HCT116 (cell line): ENCODE measurements at regions of chr4 and their contacts with region 1.

Region 1: GRCh38 chr4:130747842-130748241 is 1651.9 kb downstream of the C4orf33 start:
- DNase-seq: peak; percentile 1
- ATAC-seq: no peak
- H3K4me3 ChIP-seq: no peak overlapping the region
- H3K27ac ChIP-seq: no peak overlapping the region
- H3K4me1 ChIP-seq: no peaks in the 10 kb centered on the region
- H3K27me3 ChIP-seq: no peaks in the 10 kb centered on the region
- CTCF ChIP-seq: peak in 2 of 3 experiments; percentile 21 to 57; a peak in 3 of 6 replicates
- POLR2A ChIP-seq: no peak
- RAD21 ChIP-seq: peak; percentile 52

Region 2: GRCh38 chr4:130591081-130591480 is 156.8 kb before region 1 on chr4:
- CTCF ChIA-PET with region 1: no interaction called
- POLR2A ChIA-PET with region 1: no interaction called
- RAD21 ChIA-PET with region 1: no interaction called
- intact Hi-C with region 1: no loop called
- DNase-seq: no peak
- ATAC-seq: no peak
- H3K4me3 ChIP-seq: no peak overlapping the region
- H3K27ac ChIP-seq: no peak overlapping the region
- H3K4me1 ChIP-seq: no peaks in the 10 kb centered on the region
- H3K27me3 ChIP-seq: no peaks in the 10 kb centered on the region
- CTCF ChIP-seq: no peak
- POLR2A ChIP-seq: no peak
- RAD21 ChIP-seq: no peak

Region 3: GRCh38 chr4:130712038-130712437 is 35.8 kb before region 1 on chr4:
- CTCF ChIA-PET with region 1: no interaction called
- POLR2A ChIA-PET with region 1: no interaction called
- RAD21 ChIA-PET with region 1: no interaction called
- intact Hi-C with region 1: no loop called
- DNase-seq: no peak
- ATAC-seq: no peak
- H3K4me3 ChIP-seq: no peak overlapping the region
- H3K27ac ChIP-seq: no peak overlapping the region
- H3K4me1 ChIP-seq: 0 out of 4 replicates have a peak, but pooled peaks cover 0 to 3% of the 10 kb centered on the region in 2 experiments
- H3K27me3 ChIP-seq: no peaks in the 10 kb centered on the region
- CTCF ChIP-seq: no peak
- POLR2A ChIP-seq: no peak
- RAD21 ChIP-seq: no peak

Region 4: GRCh38 chr4:131084997-131085396 is 337.2 kb after region 1 on chr4:
- CTCF ChIA-PET with region 1: no interaction called
- POLR2A ChIA-PET with region 1: no interaction called
- RAD21 ChIA-PET with region 1: no interaction called
- intact Hi-C with region 1: loop called (anchors 10 kb)
- DNase-seq: no peak
- ATAC-seq: no peak
- H3K4me3 ChIP-seq: no peak overlapping the region
- H3K27ac ChIP-seq: no peak overlapping the region
- H3K4me1 ChIP-seq: no peaks in the 10 kb centered on the region
- H3K27me3 ChIP-seq: no peaks in the 10 kb centered on the region
- CTCF ChIP-seq: no peak
- POLR2A ChIP-seq: no peak
- RAD21 ChIP-seq: no peak